ENCODE measurements at regions of chr5 and their contacts with region 1.

Region 1: GRCh38 chr5:137888857-137889759 is at the start of gene PKD2L2:
- H3K4me3 ChIP-seq: peak within 1 kb of the TSS; percentile 56
- H3K27ac ChIP-seq: peak within 1 kb of the TSS; percentile 59
- H3K4me1 ChIP-seq: peaks cover 11% of the 10 kb centered on the region
- CTCF ChIP-seq: peak; percentile 46; the same call in 1 of the 2 replicates

Region 2: DNA sequence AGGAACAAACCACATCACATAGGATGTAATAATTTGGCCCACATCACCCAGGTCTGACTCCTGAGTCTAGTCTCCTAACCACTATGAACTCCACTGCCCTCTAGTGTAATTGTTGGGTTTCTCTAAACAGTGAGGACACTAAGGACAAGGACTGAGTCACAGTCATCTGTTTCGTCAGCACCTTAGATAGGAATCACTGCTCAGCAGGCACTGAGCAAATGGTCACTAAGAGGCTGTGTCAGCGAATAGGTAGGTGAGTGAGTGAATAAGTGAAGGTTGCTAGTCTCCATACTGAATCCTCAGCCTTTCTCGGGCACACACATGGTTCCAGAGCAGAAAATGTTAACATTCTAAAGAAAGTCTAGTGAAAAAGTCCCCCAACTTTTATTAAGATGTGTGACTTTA is 668.6 kb before region 1 on chr5:
- CTCF ChIA-PET with region 1: no interaction called
- POLR2A ChIA-PET with region 1: no interaction called
- H3K4me3 ChIP-seq: no peak overlapping the region
- H3K27ac ChIP-seq: no peak overlapping the region
- H3K4me1 ChIP-seq: no peaks in the 10 kb centered on the region
- CTCF ChIP-seq: no peak

Region 3: DNA sequence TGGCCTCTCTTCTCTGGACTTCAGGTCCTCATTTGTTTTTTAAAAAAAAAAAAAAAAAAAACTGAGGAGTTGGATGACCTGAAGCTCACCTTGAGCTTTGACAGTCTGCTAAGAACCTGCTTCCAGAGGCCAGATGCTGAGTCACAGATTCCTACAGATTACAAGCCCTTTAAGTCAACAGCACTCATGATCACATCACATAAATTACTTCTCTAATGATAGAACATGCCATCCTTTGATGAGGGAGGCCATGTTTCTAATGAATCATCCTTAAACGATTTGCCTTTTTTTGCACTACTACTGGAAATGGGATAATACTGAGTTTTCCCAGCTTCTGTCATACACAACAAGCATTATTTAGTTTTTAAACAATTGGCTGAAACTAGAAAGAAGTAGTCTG is 55.6 kb before region 1 on chr5:
- CTCF ChIA-PET with region 1: interaction called, 4 read pairs
- POLR2A ChIA-PET with region 1: interaction called, 10 read pairs
- H3K4me3 ChIP-seq: no peak overlapping the region
- H3K27ac ChIP-seq: no peak overlapping the region
- H3K4me1 ChIP-seq: peaks cover 22% of the 10 kb centered on the region; the same call in 1 of the 2 replicates
- CTCF ChIP-seq: no peak

Region 4: GRCh38 chr5:137856201-137856600 is 32.9 kb before region 1 on chr5:
- CTCF ChIA-PET with region 1: no interaction called
- POLR2A ChIA-PET with region 1: no interaction called
- H3K4me3 ChIP-seq: no peak overlapping the region
- H3K27ac ChIP-seq: no peak overlapping the region
- H3K4me1 ChIP-seq: peaks cover 5% of the 10 kb centered on the region; the same call in 1 of the 2 replicates
- CTCF ChIP-seq: no peak

Region 5: DNA sequence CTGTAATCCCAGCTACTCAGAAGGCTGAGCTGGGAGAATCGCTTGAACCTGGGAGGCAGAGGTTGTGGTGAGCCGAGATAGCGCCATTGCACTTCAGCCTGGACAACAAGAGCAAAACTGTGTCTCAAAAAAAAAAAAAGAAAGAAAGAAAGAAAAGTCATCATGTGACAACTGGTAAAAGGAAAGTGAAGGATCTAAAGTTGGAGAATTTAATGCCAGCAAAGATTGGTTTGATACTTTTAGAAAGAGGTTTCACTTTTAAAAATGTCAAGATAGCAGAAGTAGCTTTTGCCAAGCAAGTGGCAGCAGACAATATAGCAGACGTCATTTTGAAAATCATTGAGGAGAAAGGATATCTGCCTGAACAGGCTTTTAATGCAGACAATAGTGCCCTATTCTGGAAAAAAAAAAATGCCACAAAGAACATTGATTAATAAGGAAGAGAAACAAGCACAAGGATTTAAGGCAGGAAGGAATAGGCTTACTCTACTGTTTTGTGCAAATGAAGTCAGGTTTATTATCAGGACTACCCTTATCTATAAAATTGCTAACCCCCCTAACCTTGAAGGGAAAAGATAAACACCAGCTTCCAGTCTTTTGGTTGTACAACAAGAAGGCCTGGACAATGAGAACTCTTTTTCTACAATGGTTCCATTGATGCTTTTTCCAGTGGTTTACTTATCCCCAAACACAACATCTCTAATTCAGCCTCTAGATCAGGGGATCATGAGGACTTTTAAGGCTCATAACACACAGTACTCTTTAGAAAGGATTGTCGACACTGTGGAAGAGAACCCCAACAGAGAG is 12.1 kb after region 1 on chr5:
- CTCF ChIA-PET with region 1: interaction called, 10 read pairs
- POLR2A ChIA-PET with region 1: no interaction called
- H3K4me3 ChIP-seq: no peak overlapping the region
- H3K27ac ChIP-seq: no peak overlapping the region
- H3K4me1 ChIP-seq: peaks cover 3% of the 10 kb centered on the region; the same call in 1 of the 2 replicates
- CTCF ChIP-seq: no peak

Measured in HEK293 (cell line).